MCF 10A (cell line): ENCODE measurements at regions of chr17 and their contacts with region 1.

Region 1: DNA sequence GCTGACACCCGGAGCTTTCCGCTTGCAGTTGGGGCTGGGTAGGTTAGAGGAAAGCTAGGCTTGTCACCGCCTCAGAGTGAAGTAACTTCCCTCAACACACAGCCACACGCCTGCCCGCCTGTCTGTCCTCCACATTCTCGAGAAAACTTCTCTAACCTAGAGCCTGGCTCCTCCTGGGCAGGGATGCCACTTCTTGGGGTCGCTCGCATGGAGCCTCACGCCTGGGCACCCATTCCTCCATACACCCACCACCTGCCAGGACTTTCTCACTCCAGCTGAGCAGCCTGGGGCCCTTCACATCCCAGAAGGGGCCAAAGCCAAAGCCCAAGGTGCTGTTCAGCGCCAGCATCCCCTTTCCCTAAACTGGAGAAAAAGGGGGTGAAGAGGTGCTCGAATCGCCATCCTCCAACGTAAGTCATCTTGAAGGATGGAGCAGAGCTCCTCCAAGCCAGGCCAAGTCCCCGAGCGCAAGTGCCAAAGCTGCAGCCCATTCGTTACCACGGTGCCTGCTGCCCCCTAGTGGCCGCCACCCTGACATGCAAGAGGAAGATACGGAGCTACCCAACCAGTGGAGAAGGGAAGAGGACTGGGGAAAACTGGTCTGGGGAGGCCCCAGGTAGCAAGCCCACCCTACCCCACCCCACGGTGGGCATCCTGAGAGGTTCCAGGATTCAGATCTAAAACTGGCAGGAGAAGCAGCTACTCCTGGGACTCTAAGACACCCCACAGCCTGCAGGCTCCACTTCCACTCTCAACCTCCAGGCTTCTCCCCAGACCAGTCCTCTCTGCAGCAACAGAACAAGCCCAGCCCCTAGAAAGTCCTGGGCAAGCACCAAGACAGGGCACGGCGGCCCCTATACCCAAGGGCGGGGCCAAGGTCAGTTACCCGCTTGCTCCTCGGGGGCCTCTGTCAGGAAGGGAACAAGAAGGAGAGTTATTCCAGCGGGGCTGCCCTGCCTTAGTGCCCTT is 63.1 kb downstream of the MYO18A start:
- DNase-seq: peak; percentile 68
- H3K4me3 Mint-ChIP-seq: no peak overlapping the region
- H3K27ac Mint-ChIP-seq: no peak overlapping the region
- H3K4me1 Mint-ChIP-seq: no peaks in the 10 kb centered on the region
- H3K27me3 Mint-ChIP-seq: no peaks in the 10 kb centered on the region
- CTCF ChIP-seq: peak; percentile 90

Region 2: GRCh38 chr17:28967221-28968140 is 149.6 kb before region 1 on chr17:
- CTCF ChIA-PET with region 1: interaction called, 279 read pairs
- POLR2A ChIA-PET with region 1: interaction called, 27 read pairs
- intact Hi-C with region 1: loop called (anchors 1 kb)
- DNase-seq: no peak
- H3K4me3 Mint-ChIP-seq: no peak overlapping the region
- H3K27ac Mint-ChIP-seq: no peak overlapping the region
- H3K4me1 Mint-ChIP-seq: no peaks in the 10 kb centered on the region
- H3K27me3 Mint-ChIP-seq: peaks cover 42% of the 10 kb centered on the region
- CTCF ChIP-seq: no peak

Region 3: DNA sequence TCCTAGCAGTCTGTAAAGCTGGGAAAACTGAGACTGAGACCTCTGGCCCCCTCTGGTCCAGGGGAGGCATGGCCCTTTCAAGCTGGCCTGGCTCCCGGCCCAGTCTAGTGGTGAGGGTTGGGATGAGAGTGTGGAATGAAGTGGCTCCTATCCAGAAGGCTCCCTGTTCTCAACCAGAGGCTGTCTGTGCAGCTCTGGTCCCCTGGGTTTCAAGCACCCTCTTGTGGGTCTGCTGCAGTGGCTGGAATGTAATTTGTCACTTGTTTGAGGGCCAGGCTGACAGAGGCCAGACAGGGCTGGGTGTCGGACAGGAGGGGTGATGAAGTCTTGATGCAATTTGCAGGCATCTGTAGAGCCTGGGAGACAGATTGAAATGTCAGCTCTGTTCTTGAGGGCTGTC is 143.7 kb before region 1 on chr17:
- CTCF ChIA-PET with region 1: interaction called, 30 read pairs
- POLR2A ChIA-PET with region 1: interaction called, 4 read pairs
- intact Hi-C with region 1: no loop called
- DNase-seq: no peak
- H3K4me3 Mint-ChIP-seq: no peak overlapping the region
- H3K27ac Mint-ChIP-seq: no peak overlapping the region
- H3K4me1 Mint-ChIP-seq: no peaks in the 10 kb centered on the region
- H3K27me3 Mint-ChIP-seq: peaks cover 42% of the 10 kb centered on the region
- CTCF ChIP-seq: no peak

Region 4: DNA sequence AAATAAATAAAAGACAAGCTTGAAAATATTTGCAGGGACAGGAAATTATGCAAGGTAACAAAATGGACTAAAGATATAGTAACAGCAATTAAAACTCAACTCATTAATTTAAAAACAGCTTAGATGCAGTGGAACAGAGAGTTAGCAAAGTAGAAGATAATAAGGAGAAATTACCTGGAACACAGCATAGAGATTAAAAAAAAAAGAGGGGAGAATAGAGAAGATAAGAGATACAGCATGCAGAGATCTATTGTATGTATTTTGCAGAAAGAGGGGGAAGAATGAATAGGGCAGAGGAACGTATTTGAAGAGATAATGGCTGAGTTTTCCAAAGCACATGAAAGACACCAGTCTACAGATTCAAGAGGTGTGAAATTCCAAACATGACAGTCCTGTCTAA is 82.6 kb before region 1 on chr17:
- CTCF ChIA-PET with region 1: interaction called, 11 read pairs
- POLR2A ChIA-PET with region 1: interaction called, 3 read pairs
- intact Hi-C with region 1: no loop called
- DNase-seq: no peak
- H3K4me3 Mint-ChIP-seq: no peak overlapping the region
- H3K27ac Mint-ChIP-seq: no peak overlapping the region
- H3K4me1 Mint-ChIP-seq: no peaks in the 10 kb centered on the region
- H3K27me3 Mint-ChIP-seq: peaks cover 38% of the 10 kb centered on the region
- CTCF ChIP-seq: no peak

Region 5: GRCh38 chr17:29084541-29085146 is 32.4 kb before region 1 on chr17:
- CTCF ChIA-PET with region 1: interaction called, 18 read pairs
- POLR2A ChIA-PET with region 1: no interaction called
- intact Hi-C with region 1: no loop called
- DNase-seq: no peak
- H3K4me3 Mint-ChIP-seq: no peak overlapping the region
- H3K27ac Mint-ChIP-seq: no peak overlapping the region
- H3K4me1 Mint-ChIP-seq: no peaks in the 10 kb centered on the region
- H3K27me3 Mint-ChIP-seq: no peaks in the 10 kb centered on the region
- CTCF ChIP-seq: no peak

Region 6: DNA sequence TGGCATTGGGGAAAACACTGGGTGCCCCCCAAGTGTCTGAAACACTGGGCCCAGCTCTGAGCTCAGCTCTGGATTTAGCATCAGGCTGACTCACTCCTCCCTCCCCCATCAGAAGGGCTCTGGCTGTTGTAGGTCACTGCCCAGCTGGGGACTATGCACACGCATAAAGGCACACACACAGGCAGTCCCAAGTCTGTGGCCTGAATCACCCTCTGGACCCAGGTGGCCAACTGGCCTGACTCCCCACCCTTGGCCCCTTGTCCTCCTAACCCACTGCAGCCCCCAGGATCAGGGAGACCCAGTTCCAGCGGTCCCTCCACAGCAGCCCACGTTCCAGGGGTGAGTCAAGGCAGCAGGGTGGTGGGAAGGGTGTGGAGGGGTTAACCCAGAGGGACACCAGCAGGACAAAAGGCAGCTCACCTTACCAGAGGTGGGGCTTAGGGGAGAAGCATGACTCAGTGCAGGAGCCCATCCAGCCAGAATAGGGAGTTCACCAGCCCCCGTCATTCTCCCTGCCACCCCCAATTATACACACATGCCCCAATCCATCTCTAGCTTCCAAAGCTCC is 16.1 kb after region 1 on chr17:
- CTCF ChIA-PET with region 1: interaction called, 66 read pairs
- POLR2A ChIA-PET with region 1: interaction called, 3 read pairs
- intact Hi-C with region 1: no loop called
- DNase-seq: peak; percentile 47
- H3K4me3 Mint-ChIP-seq: no peak overlapping the region
- H3K27ac Mint-ChIP-seq: peak overlapping the region; percentile 61
- H3K4me1 Mint-ChIP-seq: peaks cover 26% of the 10 kb centered on the region
- H3K27me3 Mint-ChIP-seq: no peaks in the 10 kb centered on the region
- CTCF ChIP-seq: no peak

Region 7: DNA sequence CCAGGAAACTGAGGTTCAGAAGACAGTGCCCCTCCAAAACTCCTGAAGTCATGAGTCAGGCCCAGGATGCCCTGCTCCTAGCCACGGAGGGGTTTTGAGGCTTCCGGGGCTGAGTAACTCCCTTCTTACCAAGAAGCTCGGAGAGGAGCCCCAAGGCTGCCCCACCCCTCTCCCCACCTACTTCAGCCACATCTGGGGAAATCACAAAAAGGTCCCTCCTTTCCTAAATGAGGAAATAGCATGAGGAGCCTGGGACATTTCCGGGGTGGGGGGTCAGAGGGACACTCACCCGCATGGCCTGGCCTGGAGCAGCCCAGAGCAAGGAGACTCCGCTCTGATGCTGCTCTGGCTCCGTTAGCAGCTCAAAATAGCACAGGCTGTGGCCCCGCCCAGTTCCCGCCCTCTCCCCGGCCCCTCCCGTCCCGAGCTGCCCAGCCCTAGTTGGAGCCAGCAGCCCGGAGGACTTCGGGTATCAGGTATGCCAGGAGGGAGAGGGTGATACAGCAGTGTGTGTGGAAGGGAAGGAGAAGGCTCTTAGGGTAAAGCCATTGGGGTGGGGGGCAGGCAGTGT is 23.0 kb after region 1 on chr17:
- CTCF ChIA-PET with region 1: interaction called, 66 read pairs
- POLR2A ChIA-PET with region 1: no interaction called
- intact Hi-C with region 1: no loop called
- DNase-seq: peak; percentile 73
- H3K4me3 Mint-ChIP-seq: no peak overlapping the region
- H3K27ac Mint-ChIP-seq: no peak overlapping the region
- H3K4me1 Mint-ChIP-seq: peaks cover 28% of the 10 kb centered on the region
- H3K27me3 Mint-ChIP-seq: no peaks in the 10 kb centered on the region
- CTCF ChIP-seq: no peak

Region 8: DNA sequence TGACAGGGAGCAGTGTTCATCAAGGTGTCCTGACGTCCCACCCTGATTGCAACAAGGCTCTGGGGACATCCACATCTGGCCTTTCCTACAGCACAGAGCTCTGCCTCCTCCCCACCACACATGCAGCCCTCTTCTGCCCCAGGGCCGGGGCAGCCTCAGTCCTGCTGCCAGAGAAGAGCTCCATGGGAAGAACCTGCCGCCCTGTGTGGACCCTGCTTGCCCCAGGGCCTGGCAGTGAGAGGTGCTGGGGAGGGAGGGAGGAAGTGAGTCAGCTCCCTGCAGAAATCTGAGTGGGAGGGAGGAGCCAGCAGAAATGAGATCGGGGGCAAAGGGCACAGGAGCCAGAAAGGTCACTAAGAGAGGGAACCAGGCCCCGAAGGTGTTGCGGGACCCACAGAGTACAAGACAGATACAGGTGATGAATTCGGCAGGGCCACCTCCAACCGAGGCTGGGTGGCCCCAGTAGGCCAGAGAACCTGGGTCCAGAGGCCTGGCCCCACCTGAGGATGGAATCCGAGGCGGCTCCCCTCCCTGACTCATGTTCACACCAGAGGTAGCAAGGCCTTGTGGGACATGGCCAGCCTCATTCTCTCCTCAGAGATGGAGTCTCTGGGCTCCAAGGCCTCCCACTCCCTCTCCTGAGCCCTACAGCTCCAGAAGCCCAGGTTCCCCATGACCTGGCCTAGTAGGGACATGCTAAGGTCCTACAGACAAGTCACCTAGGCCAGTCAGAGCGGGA is 38.3 kb after region 1 on chr17:
- CTCF ChIA-PET with region 1: no interaction called
- POLR2A ChIA-PET with region 1: no interaction called
- intact Hi-C with region 1: no loop called
- DNase-seq: peak; percentile 94
- H3K4me3 Mint-ChIP-seq: peak overlapping the region; percentile 30
- H3K27ac Mint-ChIP-seq: peak overlapping the region; percentile 88
- H3K4me1 Mint-ChIP-seq: peaks cover 73% of the 10 kb centered on the region
- H3K27me3 Mint-ChIP-seq: no peaks in the 10 kb centered on the region
- CTCF ChIP-seq: no peak